ENCODE measurements at regions of chr7 and their contacts with region 1.

Region 1: GRCh38 chr7:116984917-116985316 is 31.6 kb downstream of the ST7 start:
- DNase-seq: no peak
- H3K4me3 ChIP-seq: no peak overlapping the region
- CTCF ChIP-seq: peak; percentile 32

Region 2: GRCh38 chr7:116955801-116956476 is 29.0 kb before region 1 on chr7:
- CTCF ChIA-PET with region 1: interaction called, 14 read pairs
- POLR2A ChIA-PET with region 1: no interaction called
- DNase-seq: no peak
- H3K4me3 ChIP-seq: no peak overlapping the region
- CTCF ChIP-seq: no peak

Region 3: DNA sequence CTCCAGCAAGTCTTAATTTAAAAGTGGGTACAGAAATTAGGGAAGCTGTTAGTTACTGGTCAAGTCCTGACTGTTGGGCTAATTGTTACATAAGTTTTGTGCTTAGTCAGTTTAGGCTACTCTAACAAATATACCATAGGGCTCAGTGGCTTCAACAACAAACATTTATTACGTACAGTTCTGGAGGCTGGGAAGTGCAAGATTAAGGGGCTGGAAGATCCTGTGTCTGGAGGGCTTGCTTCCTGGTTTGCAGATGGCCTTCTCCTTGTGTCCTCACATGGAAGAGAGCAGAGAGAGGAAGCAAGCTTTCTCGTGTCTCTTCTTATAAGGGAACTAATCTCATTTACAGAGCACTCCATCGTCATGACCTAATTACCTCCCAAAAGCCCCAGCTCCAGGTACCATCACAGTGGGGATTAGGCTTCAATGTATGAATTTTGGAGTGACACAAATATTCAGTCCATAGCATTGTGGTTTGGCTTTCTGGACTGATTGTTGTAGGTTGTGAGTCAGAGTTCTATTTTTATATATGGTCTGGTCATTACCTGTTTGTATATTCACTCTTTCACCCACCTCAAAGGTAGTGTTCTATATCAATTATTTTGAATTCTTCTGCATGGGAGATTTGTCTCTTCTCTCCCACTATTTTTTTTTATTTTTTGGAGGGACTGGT is 14.5 kb before region 1 on chr7:
- CTCF ChIA-PET with region 1: interaction called, 45 read pairs
- POLR2A ChIA-PET with region 1: no interaction called
- DNase-seq: no peak
- H3K4me3 ChIP-seq: no peak overlapping the region
- CTCF ChIP-seq: no peak

Region 4: GRCh38 chr7:116999311-116999710 is 14.4 kb after region 1 on chr7:
- CTCF ChIA-PET with region 1: interaction called, 129 read pairs
- POLR2A ChIA-PET with region 1: no interaction called
- DNase-seq: no peak
- H3K4me3 ChIP-seq: no peak overlapping the region
- CTCF ChIP-seq: no peak

Region 5: DNA sequence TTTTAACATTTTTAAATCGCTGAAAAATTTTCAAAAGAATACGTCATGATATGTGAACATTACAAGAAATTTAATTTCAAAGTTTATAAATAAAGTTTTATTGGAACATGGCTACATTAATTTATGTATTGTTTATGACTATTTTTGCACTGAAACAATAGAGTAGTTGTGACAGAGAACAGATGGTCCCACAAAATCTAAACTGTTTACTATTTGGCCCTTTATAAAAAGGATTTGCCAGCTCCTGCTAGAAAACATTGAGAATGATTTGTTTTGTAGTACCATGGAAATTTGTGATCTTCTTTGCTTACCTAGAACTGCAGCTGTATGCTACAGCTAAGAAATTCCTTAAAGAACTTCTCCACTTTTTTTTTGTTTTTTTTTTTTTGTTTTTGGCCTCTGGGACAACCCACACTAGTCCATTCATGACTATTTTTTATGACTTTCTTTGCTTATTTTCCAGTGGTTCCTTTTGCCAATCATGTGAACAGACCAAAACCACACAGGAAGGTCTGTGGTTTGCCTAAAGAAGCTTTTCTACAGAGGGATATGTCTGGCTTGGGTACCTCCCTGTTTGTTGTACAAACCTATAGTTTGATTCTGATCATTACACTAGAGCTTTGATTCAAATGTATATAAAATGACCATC is 24.1 kb after region 1 on chr7:
- CTCF ChIA-PET with region 1: interaction called, 129 read pairs
- POLR2A ChIA-PET with region 1: no interaction called
- DNase-seq: no peak
- H3K4me3 ChIP-seq: no peak overlapping the region
- CTCF ChIP-seq: no peak

Region 6: GRCh38 chr7:117110480-117111337 is 125.8 kb after region 1 on chr7:
- CTCF ChIA-PET with region 1: interaction called, 519 read pairs
- POLR2A ChIA-PET with region 1: no interaction called
- DNase-seq: no peak
- H3K4me3 ChIP-seq: no peak overlapping the region
- CTCF ChIP-seq: no peak

Measured in AG04449 (cell line).